AG04450 (cell line): ENCODE measurements at regions of chr9 and their contacts with region 1.

Region 1: DNA sequence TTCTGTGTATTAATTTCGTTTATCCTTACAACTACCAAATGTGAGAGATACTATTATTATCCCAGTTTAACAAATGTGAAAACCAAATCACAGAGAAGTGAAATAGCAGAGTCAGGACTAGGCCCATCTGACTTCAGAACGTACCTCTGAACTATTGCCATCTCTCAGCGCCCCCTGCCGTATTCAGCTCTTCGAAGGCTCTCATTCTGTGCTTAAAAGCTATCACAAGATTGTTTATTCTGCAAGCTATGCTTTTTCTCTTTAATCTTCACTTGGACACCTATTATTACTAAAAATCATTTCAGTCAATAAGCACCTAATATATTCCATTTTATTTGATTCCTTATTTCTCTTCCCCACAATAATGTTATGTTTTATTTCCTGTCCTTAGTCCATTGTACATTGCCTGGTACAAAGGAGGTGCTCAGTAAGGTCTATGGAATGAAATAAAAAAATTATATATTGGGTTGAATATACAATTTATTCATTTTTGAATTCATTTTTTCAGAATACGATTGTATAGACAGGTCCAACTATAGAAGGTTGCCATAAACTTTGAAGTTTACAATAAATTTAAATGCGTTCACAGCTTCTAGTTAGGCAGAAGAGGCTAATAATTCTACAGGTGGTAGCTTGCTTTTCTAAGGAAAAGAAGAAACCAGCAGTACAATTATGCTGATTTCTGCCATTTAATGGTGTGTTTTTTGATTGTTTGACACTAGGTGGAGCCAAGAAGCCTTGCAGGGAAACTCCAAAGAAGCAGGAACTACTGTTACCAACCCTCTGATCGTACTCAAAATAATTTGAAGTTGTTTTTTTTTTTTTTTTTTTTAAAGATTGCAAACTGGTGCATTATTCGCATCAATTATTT is 202.2 kb upstream of the DMRTA1 start:
- DNase-seq: no peak
- H3K4me3 ChIP-seq: no peak overlapping the region
- H3K27ac ChIP-seq: no peak overlapping the region
- H3K27me3 ChIP-seq: no peaks in the 10 kb centered on the region
- CTCF ChIP-seq: peak; percentile 74

Region 2: GRCh38 chr9:21985964-21986667 is 258.3 kb before region 1 on chr9:
- CTCF ChIA-PET with region 1: interaction called, 16 read pairs
- POLR2A ChIA-PET with region 1: no interaction called
- DNase-seq: no peak
- H3K4me3 ChIP-seq: no peak overlapping the region
- H3K27ac ChIP-seq: no peak overlapping the region
- H3K27me3 ChIP-seq: no peaks in the 10 kb centered on the region
- CTCF ChIP-seq: no peak

Region 3: GRCh38 chr9:22037954-22038690 is 206.3 kb before region 1 on chr9:
- CTCF ChIA-PET with region 1: interaction called, 26 read pairs
- POLR2A ChIA-PET with region 1: no interaction called
- DNase-seq: no peak
- H3K4me3 ChIP-seq: no peak overlapping the region
- H3K27ac ChIP-seq: no peak overlapping the region
- H3K27me3 ChIP-seq: no peaks in the 10 kb centered on the region
- CTCF ChIP-seq: peak; percentile 61

Region 4: GRCh38 chr9:22119537-22120158 is 124.7 kb before region 1 on chr9:
- CTCF ChIA-PET with region 1: interaction called, 17 read pairs
- POLR2A ChIA-PET with region 1: no interaction called
- DNase-seq: no peak
- H3K4me3 ChIP-seq: no peak overlapping the region
- H3K27ac ChIP-seq: no peak overlapping the region
- H3K27me3 ChIP-seq: no peaks in the 10 kb centered on the region
- CTCF ChIP-seq: peak; percentile 59

Region 5: GRCh38 chr9:22383720-22384119 is 139.3 kb after region 1 on chr9:
- CTCF ChIA-PET with region 1: no interaction called
- POLR2A ChIA-PET with region 1: no interaction called
- DNase-seq: no peak
- H3K4me3 ChIP-seq: no peak overlapping the region
- H3K27ac ChIP-seq: no peak overlapping the region
- H3K27me3 ChIP-seq: no peaks in the 10 kb centered on the region
- CTCF ChIP-seq: no peak

Region 6: GRCh38 chr9:22452415-22453010 is 208.1 kb after region 1 on chr9:
- CTCF ChIA-PET with region 1: interaction called, 52 read pairs
- POLR2A ChIA-PET with region 1: no interaction called
- DNase-seq: no peak
- H3K4me3 ChIP-seq: no peak overlapping the region
- H3K27ac ChIP-seq: no peak overlapping the region
- H3K27me3 ChIP-seq: no peaks in the 10 kb centered on the region
- CTCF ChIP-seq: peak; percentile 73